ENCODE measurements at regions of chr3 and their contacts with region 1.

Region 1: DNA sequence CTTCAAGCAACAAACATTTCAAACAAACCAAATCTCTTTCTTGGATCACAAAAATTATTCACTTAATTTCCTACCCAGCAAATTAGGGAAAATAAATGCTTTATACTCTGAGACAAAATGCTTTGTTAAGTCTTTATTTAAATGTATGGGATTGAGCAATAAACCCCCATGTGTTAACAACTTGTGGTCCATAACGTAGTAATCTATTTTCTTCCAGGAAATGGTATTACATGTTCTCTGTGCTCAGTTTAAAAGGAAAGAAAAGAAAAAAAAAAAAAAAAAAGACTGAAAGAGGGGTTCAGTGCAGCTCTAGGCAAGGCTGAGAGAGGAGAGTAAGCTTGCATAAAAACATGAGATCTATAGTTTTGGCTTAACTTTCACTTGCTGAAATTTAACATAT is 102.3 kb downstream of the PIK3CB start:
- DNase-seq: peak; percentile 14
- H3K4me3 ChIP-seq: no peak overlapping the region
- H3K27ac ChIP-seq: no peak overlapping the region
- H3K4me1 ChIP-seq: peaks cover 10% of the 10 kb centered on the region
- H3K27me3 ChIP-seq: no peaks in the 10 kb centered on the region
- CTCF ChIP-seq: no peak

Region 2: DNA sequence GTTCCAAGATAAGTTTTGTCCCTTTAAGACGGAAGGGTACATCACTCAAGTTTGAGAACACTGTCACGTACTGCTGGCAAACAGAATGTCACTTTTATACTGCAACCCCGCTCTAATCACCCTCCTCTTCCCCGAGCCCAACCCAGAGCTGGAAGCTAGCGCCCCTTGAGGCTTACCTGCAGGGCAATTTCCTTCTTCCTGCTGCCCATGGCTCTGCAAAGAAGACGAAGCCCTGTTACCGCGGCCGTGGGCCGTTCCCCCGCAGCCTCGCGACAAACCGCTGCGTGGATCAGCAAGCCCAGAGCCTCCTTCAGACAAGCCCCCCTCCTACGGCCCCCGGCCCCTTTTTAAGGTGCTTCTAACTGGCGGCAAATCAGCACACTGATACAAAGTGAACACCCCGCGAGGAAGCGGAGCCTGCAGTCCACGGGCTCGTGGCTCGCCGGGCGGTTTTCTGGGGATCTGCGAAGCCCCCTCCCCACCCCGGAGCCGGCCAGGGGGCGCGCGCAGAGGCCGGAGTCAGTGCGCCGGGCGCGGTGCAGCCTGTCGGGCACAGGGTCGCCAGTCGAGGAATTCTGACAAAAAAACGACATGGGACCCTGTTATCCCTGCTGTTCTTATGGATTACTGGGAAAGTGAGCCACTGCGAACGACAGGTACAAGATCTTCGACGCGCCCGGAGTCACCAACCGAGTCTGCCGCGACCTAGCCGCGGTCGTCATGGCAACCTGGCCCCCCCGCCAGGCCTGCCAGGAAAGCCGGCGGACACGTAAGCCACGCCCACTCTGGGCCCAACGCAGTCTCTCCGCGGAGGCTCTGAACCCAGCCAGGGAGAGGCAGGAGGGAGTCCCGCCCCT is 403.1 kb before region 1 on chr3 and contains the start of gene NME9:
- CTCF ChIA-PET with region 1: no interaction called
- POLR2A ChIA-PET with region 1: no interaction called
- intact Hi-C with region 1: no loop called
- DNase-seq: peak; percentile 85
- H3K4me3 ChIP-seq: peak within 1 kb of the TSS; percentile 61
- H3K27ac ChIP-seq: no peak within 1 kb of the TSS
- H3K4me1 ChIP-seq: peaks cover 6% of the 10 kb centered on the region
- H3K27me3 ChIP-seq: peaks cover 4% of the 10 kb centered on the region
- CTCF ChIP-seq: peak; percentile 74
- total RNA-seq, gene NME9: not detected in 2 replicates

Region 3: DNA sequence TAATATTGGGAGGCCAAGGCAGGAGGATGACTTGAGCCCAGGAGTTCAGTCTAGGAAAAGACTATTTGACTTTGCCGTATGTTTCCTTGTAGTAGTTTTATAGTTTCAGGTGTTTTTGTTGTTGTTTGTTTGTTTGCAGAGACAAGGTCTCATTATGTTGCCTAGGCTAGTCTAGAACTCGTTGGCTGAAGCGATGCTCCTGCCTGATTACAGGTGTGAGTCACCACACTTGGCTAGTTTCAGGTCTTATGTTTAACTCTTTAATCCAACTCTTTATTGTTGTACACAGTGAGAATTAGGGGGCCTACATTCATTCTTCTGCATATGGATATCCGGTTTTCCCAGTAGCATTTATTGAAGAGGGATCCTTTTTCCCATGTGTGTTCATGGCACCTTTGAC is 91.9 kb before region 1 on chr3:
- CTCF ChIA-PET with region 1: no interaction called
- POLR2A ChIA-PET with region 1: no interaction called
- intact Hi-C with region 1: no loop called
- DNase-seq: no peak
- H3K4me3 ChIP-seq: no peak overlapping the region
- H3K27ac ChIP-seq: no peak overlapping the region
- H3K4me1 ChIP-seq: no peaks in the 10 kb centered on the region
- H3K27me3 ChIP-seq: no peaks in the 10 kb centered on the region
- CTCF ChIP-seq: no peak

Region 4: DNA sequence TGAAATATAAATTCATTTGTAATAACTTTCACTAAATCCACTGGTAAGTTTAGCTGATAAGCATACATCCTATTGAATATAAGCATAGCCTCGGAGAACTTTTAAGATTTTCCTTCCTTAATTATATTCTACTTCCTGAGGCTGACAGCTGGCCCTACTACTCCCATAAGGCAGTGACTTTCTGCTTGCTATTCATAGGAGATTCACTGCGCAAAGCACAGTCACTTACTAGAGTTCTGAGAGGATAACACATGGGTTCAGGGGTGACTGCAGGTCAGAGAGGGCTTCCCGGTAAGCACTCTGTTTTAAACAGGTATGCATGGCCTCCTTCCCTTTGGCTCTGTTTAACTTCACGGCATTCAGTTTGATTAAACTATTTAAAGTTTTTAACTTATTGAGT is 48.1 kb before region 1 on chr3:
- CTCF ChIA-PET with region 1: no interaction called
- POLR2A ChIA-PET with region 1: no interaction called
- intact Hi-C with region 1: loop called (anchors 2 kb)
- DNase-seq: peak; percentile 11
- H3K4me3 ChIP-seq: no peak overlapping the region
- H3K27ac ChIP-seq: no peak overlapping the region
- H3K4me1 ChIP-seq: peaks cover 47% of the 10 kb centered on the region
- H3K27me3 ChIP-seq: no peaks in the 10 kb centered on the region
- CTCF ChIP-seq: no peak

Region 5: DNA sequence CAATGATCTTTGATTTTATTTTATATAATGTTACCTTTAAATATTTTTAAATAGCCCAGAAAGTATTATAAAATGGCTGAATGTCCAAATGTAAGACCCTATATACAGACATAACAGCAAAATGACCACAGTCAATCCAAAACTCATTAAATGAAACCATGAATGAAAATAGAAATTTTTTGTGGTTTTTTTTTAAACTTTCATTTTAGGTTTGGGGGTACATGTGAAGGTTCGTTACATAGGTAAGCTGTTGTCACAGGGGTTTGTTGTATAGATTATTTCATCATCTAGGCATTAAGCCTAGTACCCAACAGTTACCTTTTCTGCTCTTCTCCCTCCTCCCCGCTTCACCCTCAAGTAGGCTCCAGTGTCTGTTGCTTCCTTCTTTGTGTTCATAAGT is 15.1 kb before region 1 on chr3:
- CTCF ChIA-PET with region 1: no interaction called
- POLR2A ChIA-PET with region 1: interaction called, 12 read pairs
- intact Hi-C with region 1: no loop called
- DNase-seq: no peak
- H3K4me3 ChIP-seq: no peak overlapping the region
- H3K27ac ChIP-seq: no peak overlapping the region
- H3K4me1 ChIP-seq: no peaks in the 10 kb centered on the region
- H3K27me3 ChIP-seq: no peaks in the 10 kb centered on the region
- CTCF ChIP-seq: no peak